ENCODE measurements at regions of chr9 and their contacts with region 1.

Region 1: GRCh38 chr9:36632892-36633291 is 60.2 kb downstream of the MELK start:
- DNase-seq: peak in 1 of 5 donors; percentile 6
- H3K4me3 ChIP-seq: no peak overlapping the region
- H3K4me3 Mint-ChIP-seq: no peak overlapping the region
- H3K27ac ChIP-seq: no peak overlapping the region
- H3K27ac Mint-ChIP-seq: no peak overlapping the region
- H3K4me1 ChIP-seq: no peaks in the 10 kb centered on the region
- H3K4me1 Mint-ChIP-seq: no peaks in the 10 kb centered on the region
- H3K27me3 ChIP-seq: no peaks in the 10 kb centered on the region
- H3K27me3 Mint-ChIP-seq: no peaks in the 10 kb centered on the region

Region 2: DNA sequence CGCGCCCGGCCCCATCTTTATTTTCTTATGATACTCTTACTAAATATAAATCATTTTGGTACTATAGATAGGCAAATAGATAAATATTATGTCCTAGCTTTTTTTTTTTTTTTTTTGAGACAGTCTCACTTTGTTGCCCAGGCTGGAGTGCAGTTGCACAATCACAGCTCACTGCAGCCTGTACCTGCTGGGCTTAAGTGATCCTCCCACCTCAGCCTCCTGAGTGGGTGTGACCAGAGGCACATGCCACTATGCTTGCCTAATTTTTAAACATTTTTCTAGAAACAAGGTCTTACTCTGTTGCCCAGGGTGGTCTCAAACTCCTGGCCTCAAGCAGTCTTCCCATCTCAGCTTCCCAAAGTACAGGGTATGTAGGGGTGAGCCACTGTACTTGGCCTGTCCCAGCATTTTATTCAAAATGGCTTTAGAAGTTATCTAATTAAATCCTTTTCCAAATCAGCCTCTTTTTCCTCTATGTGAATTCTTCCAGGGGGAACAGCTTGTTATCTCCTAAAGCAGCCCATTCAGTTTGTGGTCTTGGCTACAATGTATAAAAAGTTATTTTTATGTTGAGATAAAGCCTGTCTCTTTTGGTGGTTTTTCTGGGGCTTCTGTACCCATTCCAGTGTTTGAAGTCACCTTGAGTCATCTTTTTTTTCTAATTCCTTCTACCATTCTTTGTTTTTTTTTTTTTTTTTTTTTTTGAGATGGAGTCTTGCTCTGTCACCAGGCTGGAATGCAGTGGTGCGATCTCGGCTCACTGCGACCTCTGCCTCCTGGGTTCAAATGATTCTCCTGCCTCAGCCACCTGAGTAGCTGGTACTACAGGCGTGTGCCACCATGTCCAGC is 48.0 kb before region 1 on chr9:
- CTCF ChIA-PET with region 1: no interaction called
- POLR2A ChIA-PET with region 1: no interaction called
- intact Hi-C with region 1: no loop called
- DNase-seq: no peak
- H3K4me3 ChIP-seq: no peak overlapping the region
- H3K4me3 Mint-ChIP-seq: no peak overlapping the region
- H3K27ac ChIP-seq: no peak overlapping the region
- H3K27ac Mint-ChIP-seq: peak overlapping the region in 1 of 7 donors; percentile 60
- H3K4me1 ChIP-seq: no peaks in the 10 kb centered on the region
- H3K4me1 Mint-ChIP-seq: peaks cover 0 to 3% (median 0%) of the 10 kb centered on the region in 4 donors
- H3K27me3 ChIP-seq: no peaks in the 10 kb centered on the region
- H3K27me3 Mint-ChIP-seq: no peaks in the 10 kb centered on the region

Region 3: DNA sequence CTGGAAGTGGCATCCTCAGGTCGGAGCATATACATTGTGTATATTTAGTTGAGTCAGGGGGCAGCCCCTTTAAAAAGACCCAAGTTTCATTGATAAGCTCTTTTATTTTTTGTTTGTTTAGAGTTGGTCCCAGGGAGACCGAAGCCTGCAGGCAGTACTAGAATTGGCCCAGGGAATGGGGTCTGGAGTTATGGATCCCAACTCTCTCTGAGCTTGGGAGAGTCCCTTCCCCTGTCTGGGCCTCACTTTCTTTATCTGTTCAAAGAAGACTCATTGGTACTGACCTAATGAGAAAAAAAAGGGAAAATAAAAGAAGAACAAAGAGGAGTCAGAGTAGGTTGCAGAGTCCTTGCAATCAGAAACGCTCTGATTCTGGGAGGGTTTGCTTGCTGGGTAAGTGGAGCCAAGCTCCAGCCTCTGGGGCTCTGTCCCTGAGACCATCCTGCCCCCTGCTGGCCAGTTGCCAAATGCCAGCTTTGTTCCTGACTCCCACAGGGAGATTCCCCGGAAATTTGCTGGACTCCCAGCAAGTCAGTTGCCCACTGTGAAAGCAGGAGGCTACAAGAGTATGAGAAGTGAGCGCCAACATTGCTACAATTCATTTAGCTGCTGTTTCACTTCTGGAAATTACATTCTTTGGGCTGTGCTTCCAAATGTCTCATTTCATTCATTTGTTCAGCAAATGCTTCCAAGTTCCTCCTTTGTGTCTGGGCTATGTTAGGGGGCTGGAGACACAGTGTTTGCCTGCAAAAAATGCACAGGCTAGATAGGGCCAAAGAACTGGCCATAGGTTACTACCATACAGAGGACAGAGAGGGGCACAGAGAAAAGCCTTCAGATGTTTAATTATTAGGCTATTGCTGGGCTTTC is 96.0 kb after region 1 on chr9:
- CTCF ChIA-PET with region 1: interaction called, 54 read pairs
- POLR2A ChIA-PET with region 1: no interaction called
- intact Hi-C with region 1: loop called (anchors 1 kb)
- DNase-seq: peak; percentile 37 to 52 (median 44)
- H3K4me3 ChIP-seq: no peak overlapping the region
- H3K4me3 Mint-ChIP-seq: no peak overlapping the region
- H3K27ac ChIP-seq: no peak overlapping the region
- H3K27ac Mint-ChIP-seq: peak overlapping the region in 1 of 7 donors; percentile 11
- H3K4me1 ChIP-seq: no peaks in the 10 kb centered on the region
- H3K4me1 Mint-ChIP-seq: no peaks in the 10 kb centered on the region
- H3K27me3 ChIP-seq: no peaks in the 10 kb centered on the region
- H3K27me3 Mint-ChIP-seq: no peaks in the 10 kb centered on the region

Region 4: DNA sequence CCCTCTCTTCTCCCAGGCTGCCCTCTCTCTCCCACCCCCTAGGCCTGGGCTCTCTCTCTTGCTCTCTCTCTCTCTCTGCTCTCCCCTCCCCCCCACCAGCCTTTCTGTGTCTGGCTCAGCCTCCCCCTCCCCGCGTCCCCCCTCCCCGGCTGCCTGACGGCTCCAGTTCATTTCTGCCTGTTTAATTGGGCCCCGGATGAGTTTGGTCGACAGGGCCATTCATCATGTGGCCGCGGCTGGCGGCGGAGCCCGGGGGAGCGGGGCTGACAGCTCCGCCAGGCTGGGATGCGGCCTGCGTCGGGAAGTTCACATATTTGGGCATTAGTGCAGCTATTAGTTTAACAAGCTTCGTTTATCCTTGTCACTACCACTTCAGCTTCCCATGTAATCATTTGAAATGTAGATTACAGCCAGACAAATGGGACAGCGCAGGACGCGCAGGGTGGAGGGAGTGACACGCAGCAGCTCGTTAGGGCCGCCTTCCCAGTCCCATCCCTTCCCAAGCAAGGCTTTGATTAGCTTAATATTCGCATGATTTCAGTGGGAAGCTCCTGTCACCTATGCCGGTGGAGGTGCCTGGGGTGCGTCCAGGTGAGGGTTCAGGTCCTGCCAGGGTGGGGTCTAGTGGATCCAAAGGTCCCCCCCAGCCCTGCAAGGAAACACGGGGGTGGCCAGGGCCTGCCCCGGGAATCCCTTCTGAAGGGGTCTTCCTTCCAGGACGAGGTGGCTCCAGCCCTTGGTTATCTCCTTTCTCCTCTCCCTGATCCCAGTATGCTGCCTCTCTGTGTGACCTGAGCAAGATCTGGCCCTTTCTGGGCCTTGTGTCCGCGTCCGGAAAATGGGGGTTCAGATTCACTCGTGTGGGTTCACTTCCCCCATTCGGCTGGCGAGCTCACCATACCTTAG is 186.3 kb after region 1 on chr9:
- CTCF ChIA-PET with region 1: no interaction called
- POLR2A ChIA-PET with region 1: no interaction called
- intact Hi-C with region 1: no loop called
- DNase-seq: no peak
- H3K4me3 ChIP-seq: no peak overlapping the region
- H3K4me3 Mint-ChIP-seq: no peak overlapping the region
- H3K27ac ChIP-seq: no peak overlapping the region
- H3K27ac Mint-ChIP-seq: no peak overlapping the region
- H3K4me1 ChIP-seq: no peaks in the 10 kb centered on the region
- H3K4me1 Mint-ChIP-seq: peaks cover 0 to 5% (median under 1%) of the 10 kb centered on the region in 4 donors
- H3K27me3 ChIP-seq: no peaks in the 10 kb centered on the region
- H3K27me3 Mint-ChIP-seq: peaks cover 19 to 28% of the 10 kb centered on the region in 2 donors

Region 5: DNA sequence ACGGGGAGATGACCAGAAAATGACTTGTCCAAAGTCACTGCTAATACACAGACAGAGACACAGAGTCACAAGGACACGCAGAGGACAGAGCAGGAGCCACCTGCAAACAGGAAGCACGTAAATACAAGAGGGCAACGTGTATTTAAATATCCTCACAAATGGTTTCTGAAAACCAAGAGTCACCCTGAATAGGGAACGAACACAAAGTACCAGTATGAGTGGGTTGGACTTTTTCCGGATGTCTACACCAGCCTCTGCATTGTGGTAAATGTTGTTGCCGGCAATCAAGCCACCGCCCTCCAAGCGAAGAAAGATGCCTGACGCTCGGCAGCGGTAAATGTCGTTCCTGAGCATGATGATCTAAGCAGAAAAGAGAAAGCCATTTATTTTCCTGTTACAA is 898.8 kb after region 1 on chr9:
- CTCF ChIA-PET with region 1: no interaction called
- POLR2A ChIA-PET with region 1: no interaction called
- intact Hi-C with region 1: no loop called
- DNase-seq: peak; percentile 72 to 86 (median 84)
- H3K4me3 ChIP-seq: no peak overlapping the region
- H3K4me3 Mint-ChIP-seq: peak overlapping the region; percentile 70 to 83 (median 75)
- H3K27ac ChIP-seq: peak overlapping the region; percentile 75
- H3K27ac Mint-ChIP-seq: peak overlapping the region; percentile 90 to 99 (median 97)
- H3K4me1 ChIP-seq: peaks cover 31% of the 10 kb centered on the region
- H3K4me1 Mint-ChIP-seq: peaks cover 15 to 36% (median 25%) of the 10 kb centered on the region in 4 donors
- H3K27me3 ChIP-seq: no peaks in the 10 kb centered on the region
- H3K27me3 Mint-ChIP-seq: no peaks in the 10 kb centered on the region